ENCODE measurements at regions of chr22 and their contacts with region 1.

Region 1: GRCh38 chr22:50525390-50526068 is at the start of gene SCO2:
- DNase-seq: peak; percentile 95 to 99 (median 98)
- ATAC-seq: peak; percentile 71 to 79
- H3K4me3 Mint-ChIP-seq: peak within 1 kb of the TSS; percentile 72 to 91 (median 86)
- H3K27ac Mint-ChIP-seq: peak within 1 kb of the TSS; percentile 70 to 94 (median 88)
- H3K4me1 Mint-ChIP-seq: peaks cover 18 to 41% (median 33%) of the 10 kb centered on the region in 4 donors
- H3K27me3 Mint-ChIP-seq: peaks cover 0 to under 1% (median 0%) of the 10 kb centered on the region in 5 donors
- polyA plus RNA-seq, gene SCO2: 4.0 to 8.3 (median 6.8) TPM

Region 2: DNA sequence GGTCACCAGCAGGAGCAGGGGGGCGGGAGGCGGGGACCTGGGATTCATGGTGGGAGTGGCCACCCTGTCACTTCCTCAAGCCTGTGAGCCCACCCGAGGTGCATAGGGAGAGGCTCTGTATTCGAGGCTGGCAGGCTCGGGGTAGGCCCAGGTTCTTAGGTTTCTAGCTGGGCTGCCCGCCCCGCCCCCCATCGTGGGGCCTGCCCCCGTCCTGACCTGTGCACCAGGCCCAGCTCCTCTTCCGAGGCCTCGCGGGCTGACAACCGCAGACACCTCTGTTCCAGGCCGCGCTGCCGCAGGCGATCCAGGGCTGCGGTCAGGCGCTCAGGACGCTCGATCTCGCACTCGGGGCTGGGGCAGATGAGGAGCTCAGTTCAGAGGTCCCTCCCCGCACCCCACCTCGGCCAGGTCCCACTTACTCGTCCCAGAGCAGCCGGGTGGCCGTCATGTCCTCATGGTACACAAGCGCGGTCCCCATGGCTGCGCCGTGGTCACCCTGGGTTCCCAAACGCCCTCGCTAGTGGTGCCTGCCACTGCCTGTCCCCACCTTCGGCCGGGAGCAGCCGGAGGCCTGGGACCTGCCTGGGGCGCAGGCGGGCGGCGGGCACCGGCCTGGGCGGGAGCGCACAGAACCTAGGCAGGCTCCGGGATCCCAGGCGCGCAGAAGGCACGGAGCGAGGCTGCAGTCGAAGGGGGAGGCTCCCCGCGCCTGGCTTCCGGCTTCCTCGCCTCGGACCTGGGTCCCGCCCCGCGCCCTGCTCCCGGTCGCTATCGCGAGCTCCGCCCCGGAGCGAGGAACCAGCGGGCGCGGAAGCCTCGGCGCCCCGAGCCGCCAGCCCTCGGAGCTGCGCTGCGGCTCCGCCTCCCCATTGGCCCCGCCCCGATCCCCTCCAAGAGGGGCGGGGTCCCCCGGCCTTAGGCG is 274.7 kb before region 1 on chr22 and contains the start of gene HDAC10:
- POLR2A ChIA-PET with region 1: interaction called, 15 read pairs
- DNase-seq: peak; percentile 59 to 87 (median 71)
- ATAC-seq: peak; percentile 72 to 82
- H3K4me3 Mint-ChIP-seq: peak within 1 kb of the TSS; percentile 60 to 87 (median 77)
- H3K27ac Mint-ChIP-seq: peak within 1 kb of the TSS; percentile 23 to 83 (median 62)
- H3K4me1 Mint-ChIP-seq: peaks cover 0 to 25% (median 7%) of the 10 kb centered on the region in 4 donors
- H3K27me3 Mint-ChIP-seq: no peaks in the 10 kb centered on the region
- polyA plus RNA-seq, gene HDAC10: 5.4 to 7.8 (median 6.4) TPM

Region 3: GRCh38 chr22:50469377-50470305 is 55.9 kb before region 1 on chr22:
- POLR2A ChIA-PET with region 1: interaction called, 29 read pairs
- DNase-seq: peak; percentile 87 to 100 (median 96)
- ATAC-seq: peak; percentile 78 to 87
- H3K4me3 Mint-ChIP-seq: peak overlapping the region; percentile 75 to 98 (median 86)
- H3K27ac Mint-ChIP-seq: peak overlapping the region; percentile 88 to 98 (median 96)
- H3K4me1 Mint-ChIP-seq: peaks cover 40 to 86% (median 74%) of the 10 kb centered on the region in 4 donors
- H3K27me3 Mint-ChIP-seq: no peaks in the 10 kb centered on the region

Region 4: DNA sequence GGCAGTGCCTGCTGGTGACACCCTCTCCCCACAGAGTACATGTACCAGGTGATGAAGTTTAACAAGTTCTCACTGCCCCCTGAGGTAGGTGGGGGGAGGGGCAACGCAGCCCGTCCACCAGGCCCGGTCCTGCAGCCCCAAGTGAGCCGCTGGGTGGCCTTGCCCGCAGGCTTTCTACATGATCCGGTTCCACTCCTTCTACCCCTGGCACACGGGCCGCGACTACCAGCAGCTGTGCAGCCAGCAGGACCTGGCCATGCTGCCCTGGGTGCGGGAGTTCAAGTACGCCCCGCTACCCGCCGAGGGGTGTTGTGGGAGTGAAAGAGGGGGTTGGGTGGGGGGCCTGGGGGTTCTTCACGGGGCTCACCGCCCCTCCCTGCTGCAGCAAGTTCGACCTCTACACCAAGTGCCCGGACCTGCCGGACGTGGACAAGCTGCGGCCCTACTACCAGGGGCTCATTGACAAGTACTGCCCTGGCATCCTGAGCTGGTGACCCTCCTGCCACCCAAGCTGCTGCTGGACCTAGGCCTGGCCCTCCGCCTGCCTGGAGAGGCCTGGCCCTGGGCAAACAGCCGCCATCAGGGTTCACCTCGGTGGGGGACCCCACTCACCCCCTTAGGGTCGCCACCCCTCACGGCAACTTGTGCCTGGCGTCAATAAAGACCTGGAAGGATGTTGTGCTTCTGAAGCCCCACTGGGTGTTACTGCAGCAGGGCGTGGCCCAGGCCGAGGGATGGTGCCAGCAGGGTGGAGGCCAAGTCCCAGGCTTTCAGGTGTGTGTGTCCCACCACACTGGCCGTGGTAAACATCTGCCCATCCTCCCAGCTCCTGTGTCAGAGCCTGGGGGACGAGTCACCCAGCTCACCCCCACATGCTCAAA is 35.9 kb before region 1 on chr22:
- POLR2A ChIA-PET with region 1: no interaction called
- DNase-seq: no peak
- ATAC-seq: no peak
- H3K4me3 Mint-ChIP-seq: peak overlapping the region in 1 of 10 donors; percentile 30
- H3K27ac Mint-ChIP-seq: peak overlapping the region in 1 of 10 donors; percentile 62
- H3K4me1 Mint-ChIP-seq: peaks cover 7 to 19% (median 11%) of the 10 kb centered on the region in 4 donors
- H3K27me3 Mint-ChIP-seq: no peaks in the 10 kb centered on the region

Region 5: DNA sequence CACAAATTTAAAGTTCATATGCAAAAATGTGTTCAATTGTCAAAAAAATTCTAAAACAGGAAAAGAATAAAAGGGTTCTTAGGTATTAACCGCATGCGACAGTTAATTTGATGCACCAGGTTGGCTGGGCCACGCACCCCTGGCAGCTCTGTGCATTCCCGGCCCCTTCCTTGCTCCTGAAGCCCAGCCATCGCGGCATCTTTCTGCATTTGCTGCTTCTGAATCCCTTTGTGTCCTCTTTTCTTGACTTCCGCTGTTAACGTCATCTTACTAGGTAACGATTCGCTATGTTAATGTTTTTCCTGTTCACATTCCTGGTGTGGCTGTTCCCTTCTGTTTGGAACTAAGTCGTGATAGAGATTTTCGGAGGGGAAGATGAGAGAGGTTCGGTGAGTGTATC is 12.2 kb after region 1 on chr22:
- POLR2A ChIA-PET with region 1: interaction called, 121 read pairs
- DNase-seq: no peak
- ATAC-seq: no peak
- H3K4me3 Mint-ChIP-seq: peak overlapping the region in 4 of 10 donors; percentile 11 to 65 (median 34)
- H3K27ac Mint-ChIP-seq: peak overlapping the region; percentile 63 to 100 (median 86)
- H3K4me1 Mint-ChIP-seq: peaks cover 10 to 70% (median 22%) of the 10 kb centered on the region in 4 donors
- H3K27me3 Mint-ChIP-seq: peaks cover 0 to 4% (median 0%) of the 10 kb centered on the region in 5 donors

Region 6: DNA sequence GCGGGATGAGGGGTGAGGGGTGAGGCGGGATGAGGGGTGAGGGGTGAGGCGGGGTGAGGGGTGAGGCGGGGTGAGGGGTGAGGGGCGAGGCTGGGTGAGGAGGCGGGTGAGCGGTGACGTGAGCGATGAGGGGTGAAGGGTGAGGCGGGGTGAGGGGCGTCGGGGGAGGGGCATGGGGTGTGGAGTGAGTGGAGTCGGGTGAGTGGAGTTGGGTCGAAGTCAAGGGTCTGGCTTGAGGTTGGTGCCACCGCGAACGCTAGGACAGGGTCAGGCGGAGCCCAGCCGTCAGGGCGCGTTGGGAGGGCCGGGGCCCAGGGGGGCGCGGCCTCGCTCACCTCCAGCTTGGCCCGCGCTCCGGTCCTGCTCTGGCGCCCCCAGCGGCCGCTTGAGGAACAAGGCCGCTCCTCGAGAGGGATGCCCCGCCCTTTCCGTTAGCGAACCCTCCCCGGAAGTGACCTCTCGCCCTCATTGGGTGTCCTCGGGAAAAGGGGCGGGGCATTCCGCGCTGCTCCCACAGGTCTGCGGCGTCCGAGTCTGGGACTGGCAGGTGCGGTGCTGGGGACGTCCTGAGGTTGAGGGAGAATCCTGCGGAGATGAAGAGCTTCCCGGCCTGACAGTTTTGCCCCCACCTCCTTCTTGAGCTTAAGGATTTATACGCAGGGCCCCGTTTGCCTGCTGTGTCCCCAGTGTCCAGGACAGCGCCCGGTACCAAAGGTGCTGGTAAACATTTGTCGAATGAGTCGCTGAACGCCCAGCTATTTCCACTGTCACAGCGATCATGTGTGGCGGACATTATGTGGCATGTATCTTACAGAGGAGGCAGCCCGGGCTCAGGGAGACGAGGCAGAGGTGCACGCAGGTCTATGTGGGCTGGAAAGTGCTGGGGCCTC is 37.2 kb after region 1 on chr22 and contains the start of gene SYCE3:
- POLR2A ChIA-PET with region 1: interaction called, 26 read pairs
- DNase-seq: peak; percentile 93 to 99 (median 97)
- ATAC-seq: peak; percentile 95 to 98
- H3K4me3 Mint-ChIP-seq: peak within 1 kb of the TSS; percentile 91 to 98 (median 94)
- H3K27ac Mint-ChIP-seq: peak within 1 kb of the TSS; percentile 72 to 96 (median 91)
- H3K4me1 Mint-ChIP-seq: peaks cover 12 to 23% (median 17%) of the 10 kb centered on the region in 4 donors
- H3K27me3 Mint-ChIP-seq: no peaks in the 10 kb centered on the region
- polyA plus RNA-seq, gene SYCE3: not detected

Region 7: GRCh38 chr22:50627642-50628542 is 102.4 kb after region 1 on chr22 and contains the start of gene ARSA:
- POLR2A ChIA-PET with region 1: interaction called, 13 read pairs
- DNase-seq: peak; percentile 59 to 87 (median 74)
- ATAC-seq: peak; percentile 91 to 92
- H3K4me3 Mint-ChIP-seq: peak within 1 kb of the TSS; percentile 79 to 96 (median 91)
- H3K27ac Mint-ChIP-seq: peak within 1 kb of the TSS; percentile 89 to 97 (median 93)
- H3K4me1 Mint-ChIP-seq: peaks cover 22 to 35% (median 32%) of the 10 kb centered on the region in 4 donors
- H3K27me3 Mint-ChIP-seq: no peaks in the 10 kb centered on the region
- polyA plus RNA-seq, gene ARSA: 7.2 to 9.3 (median 7.3) TPM

Region 8: GRCh38 chr22:50641696-50642607 is 116.4 kb after region 1 on chr22:
- POLR2A ChIA-PET with region 1: no interaction called
- DNase-seq: no peak
- ATAC-seq: peak in 1 of 2 donors; percentile 44
- H3K4me3 Mint-ChIP-seq: no peak overlapping the region
- H3K27ac Mint-ChIP-seq: peak overlapping the region in 2 of 10 donors; percentile 24 to 28
- H3K4me1 Mint-ChIP-seq: peaks cover 0 to 3% (median 0%) of the 10 kb centered on the region in 4 donors
- H3K27me3 Mint-ChIP-seq: peaks cover 0 to 19% (median 9%) of the 10 kb centered on the region in 5 donors